Stomach (tissue), 19 donors: ENCODE measurements at regions of chr2 and their contacts with region 1.

Region 1: GRCh38 chr2:24075915-24076848 is at the start of gene SF3B6:
- DNase-seq: peak; percentile 100
- H3K4me3 ChIP-seq: peak within 1 kb of the TSS; percentile 73 to 90 (median 80)
- H3K27ac ChIP-seq: peak within 1 kb of the TSS; percentile 73 to 95 (median 94)
- H3K4me1 ChIP-seq: peaks cover 17 to 35% (median 32%) of the 10 kb centered on the region in 4 donors
- H3K27me3 ChIP-seq: no peaks in the 10 kb centered on the region
- CTCF ChIP-seq: peak in 1 of 7 experiments; percentile 15
- EP300 ChIP-seq: no peak
- POLR2A ChIP-seq: no peak
- total RNA-seq, gene SF3B6: 18.8 to 121 (median 40.7) TPM

Region 2: DNA sequence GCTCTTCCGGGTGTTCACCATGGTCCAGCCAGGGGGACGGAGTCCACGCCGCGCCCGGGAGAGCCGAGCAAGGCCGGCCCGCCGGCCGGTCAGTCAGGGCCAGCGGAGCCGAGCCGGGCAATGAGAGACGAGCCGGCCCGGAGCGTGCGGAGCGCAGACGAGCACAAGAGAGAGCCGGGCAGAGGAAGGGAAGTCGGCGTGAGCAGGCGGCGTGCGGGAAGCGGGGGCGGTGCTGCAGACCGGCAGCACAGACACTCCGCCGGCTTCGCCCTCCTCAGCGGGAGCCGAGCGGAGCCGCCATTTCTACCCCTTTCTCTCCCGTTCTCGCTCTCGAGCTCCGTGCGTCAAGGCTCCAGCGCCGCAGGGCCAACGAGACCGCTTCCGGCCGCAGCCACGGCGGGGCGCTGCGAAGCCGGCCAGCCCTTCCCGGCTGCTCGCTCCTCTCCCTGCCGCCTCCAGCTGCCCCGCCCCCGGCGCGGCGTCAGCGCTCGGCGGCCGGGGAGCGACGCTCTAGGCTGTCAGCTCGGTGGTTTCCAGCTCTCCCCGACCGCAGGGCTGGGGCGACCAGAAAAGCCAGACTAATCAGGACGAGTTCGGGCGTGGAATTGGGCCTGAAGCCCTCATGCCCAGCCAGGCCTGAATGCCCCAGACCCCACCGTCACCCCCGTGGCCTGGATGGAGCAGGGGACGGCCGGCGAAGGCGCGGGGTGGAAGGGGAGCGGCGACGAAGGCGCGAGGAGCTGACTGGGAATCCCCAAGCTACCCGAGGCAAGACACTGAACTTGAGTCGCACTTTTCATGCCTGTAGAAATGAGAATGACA is 149.2 kb before region 1 on chr2 and contains the start of gene ATAD2B:
- intact Hi-C with region 1: loop called (anchors 10 kb)
- DNase-seq: peak; percentile 93 to 99
- H3K4me3 ChIP-seq: peak within 1 kb of the TSS; percentile 78 to 90 (median 84)
- H3K27ac ChIP-seq: peak within 1 kb of the TSS; percentile 93 to 100 (median 98)
- H3K4me1 ChIP-seq: peaks cover 22 to 56% (median 37%) of the 10 kb centered on the region in 4 donors
- H3K27me3 ChIP-seq: no peaks in the 10 kb centered on the region
- CTCF ChIP-seq: peak in 5 of 7 experiments; percentile 43 to 90 (median 84)
- EP300 ChIP-seq: no peak
- POLR2A ChIP-seq: peak in 1 of 4 donors; percentile 50
- total RNA-seq, gene ATAD2B: 13.4 to 67.0 (median 42.6) TPM